SK-N-SH (cell line): ENCODE measurements at regions of chr14 and their contacts with region 1.

Region 1: GRCh38 chr14:35533357-35534207 is at the start of gene INSM2:
- DNase-seq: peak; percentile 96
- H3K4me3 ChIP-seq: peak within 1 kb of the TSS; percentile 66 to 75
- H3K27ac ChIP-seq: peak within 1 kb of the TSS in 1 of 2 experiments; percentile 90; a peak in 2 of 4 replicates
- H3K4me1 ChIP-seq: no peaks in the 10 kb centered on the region; a peak in 2 of 4 replicates
- H3K27me3 ChIP-seq: peaks cover 27% of the 10 kb centered on the region
- CTCF ChIP-seq: no peak
- EP300 ChIP-seq: no peak
- RAD21 ChIP-seq: no peak
- polyA plus RNA-seq, gene INSM2: 0.15 and 0.67 TPM in 2 replicates

Region 2: DNA sequence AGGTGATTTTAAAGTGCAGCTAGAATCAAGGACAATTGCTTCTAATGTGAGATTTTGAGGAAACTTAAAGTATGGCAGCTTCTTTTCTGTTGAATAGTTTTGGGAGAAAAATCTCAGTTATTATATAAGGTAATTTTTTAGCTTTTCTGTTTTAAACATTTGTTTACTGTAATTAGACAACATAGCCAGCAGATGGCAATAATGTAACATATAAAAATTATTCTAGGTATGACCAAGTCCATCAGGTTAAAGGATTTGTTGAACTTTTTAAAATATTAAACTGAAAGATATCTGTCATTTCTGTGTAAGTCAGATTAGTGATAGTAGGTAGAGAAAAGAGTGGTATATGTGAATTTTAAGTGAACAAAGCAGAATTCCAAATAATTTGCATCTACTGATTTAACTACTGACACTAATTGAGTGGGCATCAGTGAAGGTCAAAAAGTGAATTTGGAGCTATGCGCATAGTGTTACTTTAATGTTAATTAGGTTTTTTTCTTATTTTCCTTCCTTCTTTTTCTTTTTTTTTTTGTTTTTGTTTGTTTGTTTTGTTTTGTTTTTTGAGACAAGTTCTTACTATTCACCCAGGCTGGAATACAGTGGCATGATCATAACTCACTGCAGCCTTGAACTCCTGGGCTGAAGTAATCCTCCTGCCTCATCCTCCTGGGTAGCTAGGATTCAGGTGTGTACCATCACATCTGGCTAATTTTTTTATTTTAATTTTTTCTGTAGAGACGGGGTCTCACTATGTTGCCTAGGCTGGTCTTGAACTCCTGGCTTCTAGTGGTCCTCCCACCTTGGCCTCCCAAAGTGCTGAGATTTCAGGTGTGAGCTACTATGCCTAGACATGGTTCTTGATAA is 392.6 kb before region 1 on chr14:
- CTCF ChIA-PET with region 1: interaction called, 10 read pairs
- POLR2A ChIA-PET with region 1: no interaction called
- DNase-seq: peak; percentile 45
- H3K4me3 ChIP-seq: no peak overlapping the region
- H3K27ac ChIP-seq: no peak overlapping the region
- H3K4me1 ChIP-seq: no peaks in the 10 kb centered on the region
- H3K27me3 ChIP-seq: no peaks in the 10 kb centered on the region
- CTCF ChIP-seq: peak; percentile 71
- EP300 ChIP-seq: no peak
- RAD21 ChIP-seq: peak; percentile 69

Region 3: GRCh38 chr14:35438910-35439713 is 94.5 kb before region 1 on chr14:
- CTCF ChIA-PET with region 1: interaction called, 10 read pairs
- POLR2A ChIA-PET with region 1: no interaction called
- DNase-seq: peak; percentile 19
- H3K4me3 ChIP-seq: no peak overlapping the region
- H3K27ac ChIP-seq: no peak overlapping the region
- H3K4me1 ChIP-seq: no peaks in the 10 kb centered on the region
- H3K27me3 ChIP-seq: no peaks in the 10 kb centered on the region
- CTCF ChIP-seq: peak; percentile 65
- EP300 ChIP-seq: no peak
- RAD21 ChIP-seq: peak; percentile 37; the same call in 1 of the 2 replicates

Region 4: DNA sequence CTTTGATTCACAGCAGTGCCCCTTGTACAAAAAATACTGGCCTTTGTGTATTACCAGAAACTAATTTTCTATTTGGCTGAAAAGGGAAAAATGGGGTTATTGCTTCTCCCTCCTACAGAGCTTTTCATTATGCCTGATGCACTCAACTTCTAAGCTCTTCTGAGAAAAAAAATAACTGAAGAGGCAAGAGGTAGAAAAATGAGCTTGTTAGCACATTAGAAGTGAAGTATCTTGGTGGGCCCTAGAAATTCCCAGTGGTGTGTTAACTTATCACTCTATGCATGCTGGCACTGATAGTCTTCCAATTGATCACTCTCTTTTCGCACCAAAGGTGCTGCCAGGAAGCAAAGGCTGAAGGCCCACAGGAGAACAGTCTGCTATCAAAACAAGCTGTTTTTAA is 17.5 kb after region 1 on chr14:
- CTCF ChIA-PET with region 1: interaction called, 7 read pairs
- POLR2A ChIA-PET with region 1: interaction called, 37 read pairs
- DNase-seq: no peak
- H3K4me3 ChIP-seq: no peak overlapping the region
- H3K27ac ChIP-seq: peak overlapping the region in 1 of 2 experiments; percentile 16; a peak in 1 of 4 replicates
- H3K4me1 ChIP-seq: peaks cover 0 to 21% of the 10 kb centered on the region in 2 experiments; a peak in 3 of 4 replicates
- H3K27me3 ChIP-seq: no peaks in the 10 kb centered on the region
- CTCF ChIP-seq: no peak
- EP300 ChIP-seq: no peak
- RAD21 ChIP-seq: no peak

Region 5: GRCh38 chr14:35573911-35574310 is 40.3 kb after region 1 on chr14:
- CTCF ChIA-PET with region 1: interaction called, 10 read pairs
- POLR2A ChIA-PET with region 1: interaction called, 19 read pairs
- DNase-seq: peak; percentile 66
- H3K4me3 ChIP-seq: no peak overlapping the region
- H3K27ac ChIP-seq: peak overlapping the region in 1 of 2 experiments; percentile 97; a peak in 2 of 4 replicates
- H3K4me1 ChIP-seq: peaks cover 0 to 16% of the 10 kb centered on the region in 2 experiments; a peak in 2 of 4 replicates
- H3K27me3 ChIP-seq: no peaks in the 10 kb centered on the region
- CTCF ChIP-seq: no peak
- EP300 ChIP-seq: peak; percentile 18 to 99; a peak in 3 of 4 replicates
- RAD21 ChIP-seq: no peak